Mammary epithelial cell (primary cell): ENCODE measurements at regions of chr11 and their contacts with region 1.

Region 1: DNA sequence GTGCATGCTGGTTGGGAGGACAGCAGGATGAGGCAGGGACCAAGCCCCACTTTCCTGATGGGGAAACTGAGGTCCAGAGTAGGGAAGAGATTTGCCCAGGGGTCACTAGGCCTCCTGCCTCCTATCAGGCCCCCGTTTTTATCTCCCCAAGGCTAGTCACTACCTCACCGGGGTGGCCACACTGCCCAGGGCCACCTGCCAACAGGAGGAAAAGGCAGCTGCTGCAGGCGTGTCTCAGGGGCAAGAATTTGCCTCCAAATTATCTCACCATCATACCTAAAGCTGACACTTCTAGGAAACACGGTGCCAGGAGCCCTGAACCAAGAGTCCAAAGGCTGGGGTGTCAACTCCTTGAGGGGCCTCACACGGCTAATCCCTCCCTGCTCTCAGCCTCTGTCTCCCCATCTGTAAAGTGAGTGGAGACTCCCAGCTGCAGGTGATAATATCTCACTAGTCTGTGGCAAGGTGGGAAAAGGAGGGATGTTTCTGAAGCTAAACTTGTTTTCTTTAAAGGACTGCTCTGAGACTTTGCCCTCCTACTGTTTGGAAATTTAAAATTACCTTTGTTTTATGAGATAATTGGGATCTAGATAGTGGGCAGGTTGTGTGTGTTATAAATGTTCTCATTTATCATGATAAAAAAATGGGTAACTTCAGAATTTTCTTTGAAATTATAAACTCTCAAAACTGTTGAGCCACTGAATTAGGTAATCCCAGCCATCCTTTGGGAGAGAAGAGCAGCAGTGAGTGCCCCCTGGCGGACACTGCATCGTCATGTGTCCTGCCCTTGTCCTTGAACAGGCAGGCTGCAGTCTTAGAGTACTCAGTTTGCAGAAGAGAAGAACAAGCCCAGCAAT is 60.0 kb downstream of the MYO7A start:
- DNase-seq: peak; percentile 56
- H3K4me3 ChIP-seq: no peak overlapping the region
- H3K27ac ChIP-seq: no peak overlapping the region
- H3K4me1 ChIP-seq: peaks cover 14% of the 10 kb centered on the region
- H3K27me3 ChIP-seq: peaks cover 1% of the 10 kb centered on the region
- CTCF ChIP-seq: peak; percentile 89 to 98

Region 2: DNA sequence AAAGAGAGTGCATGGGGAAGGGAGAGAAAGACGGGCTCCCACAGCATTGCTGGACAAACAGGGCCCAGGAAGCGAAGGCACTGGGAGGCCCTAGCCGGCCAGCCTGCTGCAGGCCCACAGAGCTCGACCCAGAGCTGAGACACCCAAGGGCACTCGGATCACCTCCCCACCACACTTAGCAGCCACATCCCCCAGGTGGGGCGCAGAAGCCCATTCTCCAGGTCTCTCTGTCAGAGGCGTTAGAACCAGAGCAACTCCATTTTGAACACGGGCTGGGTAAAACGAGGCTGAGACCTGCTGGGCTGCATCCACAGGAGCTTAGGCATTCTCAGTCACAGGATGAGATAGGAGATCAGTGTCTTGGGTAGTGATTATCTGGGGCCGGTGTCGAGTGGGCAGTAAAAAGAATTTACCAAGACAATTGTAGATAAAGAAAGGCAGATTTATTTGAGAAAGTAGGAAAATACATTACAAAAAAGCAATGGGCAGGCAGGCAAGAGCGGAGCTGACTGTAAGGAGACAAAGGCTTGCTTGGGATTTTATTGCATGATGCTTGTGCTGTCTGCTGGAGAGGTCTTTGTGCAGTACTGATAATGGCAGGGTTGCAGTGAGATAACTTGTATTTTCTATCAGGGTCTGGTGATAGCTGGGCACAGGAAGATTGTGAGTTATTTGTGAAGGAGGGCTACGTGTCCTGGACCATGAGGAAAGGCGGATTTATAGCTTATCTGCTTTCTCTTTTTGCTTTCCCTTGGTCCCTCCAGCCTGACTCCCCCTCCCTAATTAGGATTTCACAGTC is 134.6 kb before region 1 on chr11:
- CTCF ChIA-PET with region 1: no interaction called
- dilution Hi-C with region 1: no loop called
- in situ Hi-C with region 1: loop called in 1 of 2 experiments (anchors 10 kb)
- intact Hi-C with region 1: no loop called
- DNase-seq: no peak
- H3K4me3 ChIP-seq: no peak overlapping the region
- H3K27ac ChIP-seq: no peak overlapping the region
- H3K4me1 ChIP-seq: no peaks in the 10 kb centered on the region
- H3K27me3 ChIP-seq: no peaks in the 10 kb centered on the region
- CTCF ChIP-seq: no peak

Region 3: DNA sequence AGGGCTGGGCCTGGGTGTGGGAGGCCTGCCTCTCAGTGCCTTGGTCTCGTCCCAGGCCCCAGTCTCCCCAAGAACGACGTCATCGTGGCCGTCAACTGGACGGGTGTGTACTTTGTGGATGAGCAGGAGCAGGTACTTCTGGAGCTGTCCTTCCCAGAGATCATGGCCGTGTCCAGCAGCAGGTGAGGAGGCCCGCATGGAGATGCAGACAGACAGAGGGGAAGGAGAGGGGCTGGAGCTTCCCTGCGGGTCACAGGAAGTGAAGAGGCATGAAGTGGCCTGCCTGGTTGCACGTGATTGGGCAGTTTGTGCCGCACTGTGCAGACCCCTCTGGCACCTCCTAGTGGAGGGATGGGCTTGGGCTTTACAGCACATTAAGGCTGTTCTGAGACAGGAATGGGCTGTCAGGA is 10.4 kb after region 1 on chr11:
- CTCF ChIA-PET with region 1: interaction called, 12 read pairs
- dilution Hi-C with region 1: no loop called
- in situ Hi-C with region 1: no loop called
- intact Hi-C with region 1: no loop called
- DNase-seq: no peak
- H3K4me3 ChIP-seq: no peak overlapping the region
- H3K27ac ChIP-seq: no peak overlapping the region
- H3K4me1 ChIP-seq: no peaks in the 10 kb centered on the region
- H3K27me3 ChIP-seq: no peaks in the 10 kb centered on the region
- CTCF ChIP-seq: peak; percentile 43

Region 4: DNA sequence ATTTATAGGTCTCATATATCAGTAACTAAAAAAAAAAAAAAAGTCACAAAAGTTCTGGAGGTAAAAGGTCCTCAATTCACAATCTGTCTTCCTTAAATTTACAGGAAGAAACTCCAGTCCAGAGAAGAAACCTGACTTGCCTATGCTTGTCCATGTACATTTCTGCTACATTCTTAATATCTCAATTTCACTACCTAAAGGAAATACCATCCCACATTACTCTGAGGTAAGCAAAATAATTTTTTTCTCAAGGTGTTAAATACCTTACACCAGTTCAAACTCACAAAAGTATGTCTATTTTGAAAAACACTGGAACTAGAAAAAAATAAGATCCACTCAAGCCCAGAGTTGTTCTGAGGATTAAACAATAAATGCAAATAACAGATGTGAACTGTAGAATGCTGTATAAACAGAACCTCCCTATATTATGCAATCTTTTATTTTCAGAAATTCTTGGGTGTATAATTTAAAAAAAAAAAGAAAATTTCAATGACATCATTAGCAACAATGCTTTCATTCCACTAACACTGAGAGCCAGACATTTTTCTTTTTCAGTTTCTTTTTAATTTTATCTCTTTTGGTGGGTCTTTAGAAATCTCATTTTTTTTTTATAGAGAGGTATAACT is 163.4 kb after region 1 on chr11:
- CTCF ChIA-PET with region 1: no interaction called
- dilution Hi-C with region 1: no loop called
- in situ Hi-C with region 1: no loop called
- intact Hi-C with region 1: loop called (anchors 5 kb)
- DNase-seq: peak; percentile 69
- H3K4me3 ChIP-seq: peak overlapping the region in 1 of 3 experiments; percentile 17
- H3K27ac ChIP-seq: peak overlapping the region; percentile 79
- H3K4me1 ChIP-seq: peaks cover 29% of the 10 kb centered on the region
- H3K27me3 ChIP-seq: no peaks in the 10 kb centered on the region
- CTCF ChIP-seq: no peak

Region 5: GRCh38 chr11:77411717-77412441 is 223.9 kb after region 1 on chr11:
- CTCF ChIA-PET with region 1: no interaction called
- dilution Hi-C with region 1: no loop called
- in situ Hi-C with region 1: no loop called
- intact Hi-C with region 1: loop called (anchors 5 kb)
- DNase-seq: peak; percentile 92
- H3K4me3 ChIP-seq: peak overlapping the region; percentile 65 to 87 (median 76)
- H3K27ac ChIP-seq: peak overlapping the region; percentile 58
- H3K4me1 ChIP-seq: peaks cover 32% of the 10 kb centered on the region
- H3K27me3 ChIP-seq: no peaks in the 10 kb centered on the region
- CTCF ChIP-seq: peak in 1 of 2 donors; percentile 36

Region 6: DNA sequence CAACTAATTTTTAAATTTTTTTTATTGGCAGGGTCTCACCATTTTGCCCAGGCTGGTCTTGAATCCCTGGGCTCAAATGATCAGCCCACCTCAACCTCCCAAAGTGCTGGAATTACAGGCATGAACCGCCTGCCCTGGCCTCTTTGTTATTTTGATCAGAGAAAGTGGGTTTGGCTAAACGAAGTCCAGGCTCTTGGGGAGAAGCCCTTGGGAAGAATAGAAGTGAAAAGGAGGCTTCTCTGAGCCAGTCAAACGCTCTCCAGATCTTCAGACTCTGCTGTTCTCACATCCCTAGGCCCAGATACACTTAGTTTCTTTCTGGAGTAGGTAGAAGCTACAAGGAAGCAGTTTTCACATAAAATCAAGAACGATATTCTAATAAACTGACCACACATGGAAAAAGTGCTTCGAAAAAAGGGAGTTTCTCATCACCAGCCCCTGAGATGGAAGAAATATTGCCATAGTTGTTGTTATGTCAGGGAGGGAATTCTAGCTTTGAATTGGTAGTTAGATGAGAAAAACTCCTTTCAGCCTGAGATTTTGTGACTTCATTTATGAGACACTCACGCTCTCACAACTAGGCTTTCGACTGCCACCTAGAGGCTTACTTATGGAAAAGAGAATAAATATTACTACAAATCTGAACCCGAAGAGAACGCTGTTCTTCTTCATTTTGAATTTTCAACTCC is 360.0 kb after region 1 on chr11:
- CTCF ChIA-PET with region 1: interaction called, 13 read pairs
- dilution Hi-C with region 1: no loop called
- in situ Hi-C with region 1: loop called in 1 of 2 experiments (anchors 10 kb)
- intact Hi-C with region 1: loop called (anchors 1 kb)
- DNase-seq: peak; percentile 47
- H3K4me3 ChIP-seq: no peak overlapping the region
- H3K27ac ChIP-seq: no peak overlapping the region
- H3K4me1 ChIP-seq: no peaks in the 10 kb centered on the region
- H3K27me3 ChIP-seq: no peaks in the 10 kb centered on the region
- CTCF ChIP-seq: peak; percentile 47 to 69